ENCODE measurements at regions of chr11 and their contacts with region 1.

Region 1: DNA sequence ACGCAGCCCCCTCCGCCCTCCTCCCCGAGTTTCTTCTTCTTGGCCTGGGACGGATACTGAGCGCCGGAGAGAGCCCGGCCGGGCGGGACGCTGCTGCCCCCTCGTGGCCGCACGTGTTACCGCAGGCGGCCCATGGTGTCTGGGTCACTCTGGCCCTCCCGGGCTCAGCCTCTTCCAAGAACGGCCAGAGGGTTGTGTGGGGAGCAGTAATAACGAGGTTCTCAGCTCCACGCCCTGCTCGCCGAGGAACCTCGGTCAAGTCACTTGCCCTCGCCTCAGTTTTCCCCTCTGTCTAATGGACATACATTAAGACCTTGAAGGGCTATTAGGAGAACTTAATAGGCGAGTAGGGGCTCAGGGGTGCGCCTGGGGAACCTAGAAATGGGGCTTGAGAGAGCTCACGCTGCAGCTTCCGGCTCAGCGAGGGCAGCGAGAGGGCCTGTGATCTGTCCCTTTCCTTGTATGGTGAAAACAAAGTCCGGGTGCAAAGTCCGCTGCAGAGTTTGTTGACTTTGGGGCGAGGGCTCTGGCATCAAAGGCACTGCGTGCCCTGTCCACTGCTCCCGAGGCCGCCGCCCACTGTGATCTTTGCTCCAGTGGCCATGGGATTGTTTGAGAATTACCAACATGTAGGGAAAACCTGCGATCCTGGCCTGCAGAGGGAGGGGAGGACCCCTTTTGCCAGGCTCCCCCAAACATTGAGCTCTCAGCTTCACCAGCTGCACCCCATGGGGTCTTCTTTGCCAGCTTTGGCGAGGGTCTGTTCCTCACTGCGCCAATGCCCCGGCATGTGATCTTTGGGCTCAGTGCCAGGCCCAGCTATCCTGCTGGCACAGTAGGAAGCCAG is 14.4 kb upstream of the LRP5 start:
- DNase-seq: peak; percentile 58 to 76 (median 63)
- H3K4me3 ChIP-seq: no peak overlapping the region
- H3K4me3 Mint-ChIP-seq: no peak overlapping the region
- H3K27ac ChIP-seq: no peak overlapping the region
- H3K27ac Mint-ChIP-seq: peak overlapping the region in 1 of 7 donors; percentile 24
- H3K4me1 ChIP-seq: peaks cover 7% of the 10 kb centered on the region
- H3K4me1 Mint-ChIP-seq: peaks cover 0 to 4% (median 0%) of the 10 kb centered on the region in 4 donors
- H3K27me3 ChIP-seq: no peaks in the 10 kb centered on the region
- H3K27me3 Mint-ChIP-seq: no peaks in the 10 kb centered on the region

Region 2: DNA sequence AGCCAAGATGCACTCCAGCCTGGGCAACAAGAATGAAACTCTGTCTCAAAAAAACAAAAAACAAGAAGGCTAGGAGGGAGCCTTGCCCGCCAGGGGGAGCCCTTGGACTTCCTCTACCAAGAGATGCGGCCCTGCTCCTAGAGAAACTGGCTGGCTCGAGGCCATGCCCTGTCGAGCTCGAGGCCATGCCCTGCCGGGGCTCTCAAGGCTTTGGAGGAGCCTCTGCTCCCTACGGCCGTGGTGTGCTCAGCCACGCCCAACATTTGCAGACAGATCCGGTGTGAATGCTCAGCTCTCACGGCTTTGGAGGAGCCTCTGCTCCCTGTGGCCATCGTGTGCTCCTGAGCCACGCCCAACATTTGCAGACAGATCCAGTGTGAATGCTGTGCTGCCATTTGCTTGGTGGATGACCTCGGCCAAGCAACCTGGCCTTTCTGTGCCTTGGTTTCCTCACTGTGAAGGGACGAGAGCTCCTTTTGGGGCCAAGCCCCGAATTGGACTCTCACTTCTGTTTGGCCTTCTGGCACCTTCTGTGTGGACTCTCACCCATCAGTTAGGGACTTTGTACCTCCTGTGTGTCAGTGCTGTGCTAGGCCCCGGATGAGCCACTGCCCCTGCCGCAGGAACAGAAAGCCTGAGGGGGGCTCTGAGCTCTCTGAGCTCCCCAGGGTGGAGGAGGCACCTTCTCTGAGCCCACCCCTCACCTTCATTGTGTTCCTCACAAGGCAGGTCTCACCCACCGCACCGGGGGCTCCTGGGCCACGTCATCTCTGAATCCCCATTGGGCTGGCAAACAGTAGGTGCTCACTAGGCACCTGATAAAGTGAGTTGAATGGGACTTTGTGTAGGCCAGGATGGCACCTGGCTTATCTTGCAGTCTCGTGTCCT is 40.3 kb before region 1 on chr11:
- CTCF ChIA-PET with region 1: interaction called, 273 read pairs
- POLR2A ChIA-PET with region 1: interaction called, 12 read pairs
- intact Hi-C with region 1: no loop called
- DNase-seq: peak; percentile 86 to 91 (median 87)
- H3K4me3 ChIP-seq: no peak overlapping the region
- H3K4me3 Mint-ChIP-seq: peak overlapping the region in 1 of 8 donors; percentile 51
- H3K27ac ChIP-seq: no peak overlapping the region
- H3K27ac Mint-ChIP-seq: peak overlapping the region in 4 of 7 donors; percentile 25 to 81 (median 69)
- H3K4me1 ChIP-seq: peaks cover 7% of the 10 kb centered on the region
- H3K4me1 Mint-ChIP-seq: peaks cover 2 to 12% (median 5%) of the 10 kb centered on the region in 4 donors
- H3K27me3 ChIP-seq: no peaks in the 10 kb centered on the region
- H3K27me3 Mint-ChIP-seq: no peaks in the 10 kb centered on the region

Region 3: DNA sequence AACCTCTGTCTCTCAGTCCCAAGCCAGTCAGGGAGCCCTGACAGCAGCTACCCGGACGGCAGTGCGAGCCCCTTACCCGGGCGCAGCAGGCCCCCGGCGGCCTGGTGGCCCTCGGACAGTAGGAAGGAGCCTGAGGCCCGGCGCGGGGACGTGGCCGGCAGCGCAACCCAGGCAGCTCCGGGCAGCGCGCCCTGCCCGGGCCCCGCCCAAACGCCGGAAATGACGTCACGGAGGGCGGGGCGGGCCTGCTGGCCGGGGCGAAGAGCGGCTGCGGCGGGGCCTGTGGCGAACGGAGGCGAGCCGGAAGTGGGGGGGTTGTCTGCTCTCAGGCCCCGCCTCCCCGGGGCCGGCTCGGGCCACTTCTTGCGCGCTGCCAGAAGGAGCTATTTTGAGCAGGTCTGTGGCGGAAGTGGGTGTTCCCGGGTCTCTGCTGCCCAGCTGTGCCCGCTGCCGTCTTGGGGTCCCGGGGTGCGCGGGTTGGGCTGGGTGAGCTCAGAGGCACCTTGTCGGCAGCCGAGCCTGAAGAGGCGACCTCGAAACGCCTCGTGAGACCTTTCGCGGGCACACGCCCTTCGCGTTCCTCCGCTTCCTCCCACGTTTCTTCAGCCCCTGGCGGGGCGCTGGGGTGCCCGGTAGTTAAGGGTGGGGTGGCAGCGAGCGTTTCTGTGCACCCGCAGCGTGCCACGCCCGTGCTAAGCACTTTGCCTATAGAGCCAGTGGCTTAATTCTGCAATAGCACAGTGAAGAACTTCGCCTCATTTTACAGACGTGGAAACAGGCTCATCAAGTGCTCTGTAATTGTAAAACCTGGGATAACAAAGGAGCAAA is 26.0 kb before region 1 on chr11 and contains the start of gene C11orf24:
- CTCF ChIA-PET with region 1: interaction called, 11 read pairs
- POLR2A ChIA-PET with region 1: interaction called, 3 read pairs
- intact Hi-C with region 1: loop called (anchors 1 kb)
- DNase-seq: peak; percentile 91 to 95 (median 91)
- H3K4me3 ChIP-seq: peak within 1 kb of the TSS; percentile 78 to 79
- H3K4me3 Mint-ChIP-seq: peak within 1 kb of the TSS; percentile 90 to 98 (median 96)
- H3K27ac ChIP-seq: peak within 1 kb of the TSS; percentile 89
- H3K27ac Mint-ChIP-seq: peak within 1 kb of the TSS; percentile 94 to 99 (median 98)
- H3K4me1 ChIP-seq: peaks cover 20% of the 10 kb centered on the region
- H3K4me1 Mint-ChIP-seq: peaks cover 16 to 46% (median 31%) of the 10 kb centered on the region in 4 donors
- H3K27me3 ChIP-seq: no peaks in the 10 kb centered on the region
- H3K27me3 Mint-ChIP-seq: no peaks in the 10 kb centered on the region
- total RNA-seq, gene C11orf24: 19.1 to 20.3 TPM

Region 4: GRCh38 chr11:68282141-68282970 is 15.7 kb before region 1 on chr11:
- CTCF ChIA-PET with region 1: interaction called, 13 read pairs
- POLR2A ChIA-PET with region 1: no interaction called
- intact Hi-C with region 1: no loop called
- DNase-seq: peak; percentile 11 to 55 (median 20)
- H3K4me3 ChIP-seq: no peak overlapping the region
- H3K4me3 Mint-ChIP-seq: peak overlapping the region; percentile 2 to 77 (median 60)
- H3K27ac ChIP-seq: no peak overlapping the region
- H3K27ac Mint-ChIP-seq: peak overlapping the region in 3 of 7 donors; percentile 20 to 80 (median 27)
- H3K4me1 ChIP-seq: peaks cover 16% of the 10 kb centered on the region
- H3K4me1 Mint-ChIP-seq: peaks cover 14 to 19% (median 18%) of the 10 kb centered on the region in 4 donors
- H3K27me3 ChIP-seq: no peaks in the 10 kb centered on the region
- H3K27me3 Mint-ChIP-seq: peaks cover 0 to 9% of the 10 kb centered on the region in 2 donors

Region 5: GRCh38 chr11:68312117-68312779 is 14.2 kb after region 1 on chr11 and contains the start of gene LRP5:
- CTCF ChIA-PET with region 1: interaction called, 18 read pairs
- POLR2A ChIA-PET with region 1: interaction called, 3 read pairs
- intact Hi-C with region 1: no loop called
- DNase-seq: peak in 1 of 5 donors; percentile 17
- H3K4me3 ChIP-seq: peak within 1 kb of the TSS in 1 of 2 donors; percentile 28
- H3K4me3 Mint-ChIP-seq: peak within 1 kb of the TSS; percentile 82 to 89 (median 86)
- H3K27ac ChIP-seq: no peak within 1 kb of the TSS
- H3K27ac Mint-ChIP-seq: peak within 1 kb of the TSS in 5 of 7 donors; percentile 18 to 85 (median 66)
- H3K4me1 ChIP-seq: peaks cover 11% of the 10 kb centered on the region
- H3K4me1 Mint-ChIP-seq: peaks cover 4 to 19% (median 14%) of the 10 kb centered on the region in 4 donors
- H3K27me3 ChIP-seq: no peaks in the 10 kb centered on the region
- H3K27me3 Mint-ChIP-seq: peaks cover 0 to 1% of the 10 kb centered on the region in 2 donors
- total RNA-seq, gene LRP5: 1.4 to 1.9 TPM

Region 6: DNA sequence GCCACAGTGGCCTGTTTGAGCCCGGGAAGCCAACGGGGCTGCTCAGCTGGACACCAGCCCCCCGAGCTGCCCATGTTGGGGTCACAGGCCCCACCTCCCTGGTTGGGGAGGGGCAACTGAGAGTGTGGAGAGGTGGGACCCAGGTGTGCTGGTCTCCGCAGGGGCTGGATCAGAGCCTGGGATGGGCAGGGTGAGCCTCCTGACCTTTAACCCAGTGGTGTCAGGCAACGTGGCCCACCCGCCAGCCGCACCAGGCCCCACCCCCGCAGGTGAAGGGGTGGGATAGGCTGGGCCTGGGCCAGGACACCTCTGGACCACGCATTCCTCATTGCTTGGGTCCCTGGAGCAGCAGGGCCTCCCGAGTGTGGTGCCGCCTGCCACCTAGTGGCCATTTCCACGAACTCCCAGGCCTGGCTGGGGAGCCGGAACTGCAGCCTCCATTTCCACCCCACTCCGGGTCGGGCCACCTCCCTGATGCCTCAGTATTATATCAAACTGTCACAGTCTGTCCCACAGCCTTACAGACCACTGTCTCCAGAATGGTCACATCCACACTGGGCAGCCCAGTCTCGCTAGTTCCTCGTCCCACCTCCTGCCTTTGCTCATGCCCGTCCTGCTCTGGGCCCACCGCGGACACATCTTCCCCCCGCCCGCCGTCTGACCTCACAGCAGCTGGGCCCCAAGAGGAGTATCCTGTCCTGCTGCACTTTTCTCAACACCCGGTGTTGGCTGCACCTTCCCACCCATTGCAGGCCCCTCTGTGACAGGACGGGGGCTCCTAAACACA is 149.2 kb after region 1 on chr11:
- CTCF ChIA-PET with region 1: interaction called, 4 read pairs
- POLR2A ChIA-PET with region 1: no interaction called
- intact Hi-C with region 1: loop called (anchors 1 kb)
- DNase-seq: peak; percentile 69 to 74 (median 72)
- H3K4me3 ChIP-seq: no peak overlapping the region
- H3K4me3 Mint-ChIP-seq: peak overlapping the region in 1 of 8 donors; percentile 29
- H3K27ac ChIP-seq: no peak overlapping the region
- H3K27ac Mint-ChIP-seq: peak overlapping the region in 3 of 7 donors; percentile 6 to 41 (median 12)
- H3K4me1 ChIP-seq: peaks cover 6% of the 10 kb centered on the region
- H3K4me1 Mint-ChIP-seq: peaks cover 0 to 5% (median 4%) of the 10 kb centered on the region in 4 donors
- H3K27me3 ChIP-seq: no peaks in the 10 kb centered on the region
- H3K27me3 Mint-ChIP-seq: no peaks in the 10 kb centered on the region